ENCODE measurements at regions of chr9 and their contacts with region 1.

Region 1: DNA sequence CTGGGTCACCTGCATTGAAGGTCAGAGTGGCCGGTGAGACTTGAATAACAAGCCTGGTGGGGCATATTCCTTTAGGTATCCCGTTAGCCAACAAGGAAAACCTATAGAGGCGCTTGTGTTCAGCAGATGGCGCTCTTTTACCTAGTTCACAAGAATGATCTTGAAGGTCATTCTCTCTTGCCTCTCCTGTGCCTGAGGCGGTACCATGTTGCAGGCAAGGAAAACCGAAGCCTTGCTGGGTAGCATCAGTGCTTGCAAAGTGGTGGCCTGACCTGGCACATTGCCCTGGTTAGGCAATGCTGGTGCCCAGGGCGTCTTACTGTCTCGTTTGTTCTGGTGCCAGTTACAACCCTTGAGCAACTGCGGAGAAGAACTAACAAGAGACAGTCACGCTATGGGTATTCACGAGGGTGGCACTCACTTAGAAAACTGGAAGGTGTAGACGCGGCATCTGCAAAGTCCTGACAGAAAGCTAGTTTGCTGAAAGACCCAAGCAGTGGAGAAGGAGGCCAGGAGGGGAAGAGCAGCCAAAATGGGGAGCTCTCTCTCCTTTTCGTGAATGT is 56.7 kb downstream of the AOPEP start:
- DNase-seq: peak; percentile 75
- ATAC-seq: peak; percentile 86
- H3K4me3 ChIP-seq: no peak overlapping the region
- H3K27ac ChIP-seq: no peak overlapping the region
- H3K4me1 ChIP-seq: peaks cover 29% of the 10 kb centered on the region
- H3K27me3 ChIP-seq: no peaks in the 10 kb centered on the region
- CTCF ChIP-seq: peak; percentile 90
- EP300 ChIP-seq: no peak
- POLR2A ChIP-seq: no peak
- RAD21 ChIP-seq: peak; percentile 92

Region 2: GRCh38 chr9:94882966-94883641 is 99.9 kb after region 1 on chr9:
- CTCF ChIA-PET with region 1: no interaction called
- POLR2A ChIA-PET with region 1: no interaction called
- in situ Hi-C with region 1: no loop called
- intact Hi-C with region 1: no loop called
- DNase-seq: no peak
- ATAC-seq: no peak
- H3K4me3 ChIP-seq: no peak overlapping the region
- H3K27ac ChIP-seq: no peak overlapping the region
- H3K4me1 ChIP-seq: peaks cover 27% of the 10 kb centered on the region
- H3K27me3 ChIP-seq: no peaks in the 10 kb centered on the region
- CTCF ChIP-seq: no peak
- EP300 ChIP-seq: no peak
- POLR2A ChIP-seq: no peak
- RAD21 ChIP-seq: no peak

Region 3: GRCh38 chr9:94900222-94901018 is 117.2 kb after region 1 on chr9:
- CTCF ChIA-PET with region 1: no interaction called
- POLR2A ChIA-PET with region 1: no interaction called
- in situ Hi-C with region 1: no loop called
- intact Hi-C with region 1: loop called (anchors 10 kb)
- DNase-seq: no peak
- ATAC-seq: peak; percentile 55
- H3K4me3 ChIP-seq: peak overlapping the region; percentile 32 to 58 (median 56)
- H3K27ac ChIP-seq: peak overlapping the region; percentile 85
- H3K4me1 ChIP-seq: peaks cover 88% of the 10 kb centered on the region
- H3K27me3 ChIP-seq: no peaks in the 10 kb centered on the region
- CTCF ChIP-seq: no peak
- EP300 ChIP-seq: 0 out of 4 replicates have a peak, but pooled peaks of 1 of the 2 experiments have one; percentile 12
- POLR2A ChIP-seq: 0 out of 4 replicates have a peak, but pooled peaks of 1 of the 2 experiments have one; percentile 1
- RAD21 ChIP-seq: no peak

Region 4: DNA sequence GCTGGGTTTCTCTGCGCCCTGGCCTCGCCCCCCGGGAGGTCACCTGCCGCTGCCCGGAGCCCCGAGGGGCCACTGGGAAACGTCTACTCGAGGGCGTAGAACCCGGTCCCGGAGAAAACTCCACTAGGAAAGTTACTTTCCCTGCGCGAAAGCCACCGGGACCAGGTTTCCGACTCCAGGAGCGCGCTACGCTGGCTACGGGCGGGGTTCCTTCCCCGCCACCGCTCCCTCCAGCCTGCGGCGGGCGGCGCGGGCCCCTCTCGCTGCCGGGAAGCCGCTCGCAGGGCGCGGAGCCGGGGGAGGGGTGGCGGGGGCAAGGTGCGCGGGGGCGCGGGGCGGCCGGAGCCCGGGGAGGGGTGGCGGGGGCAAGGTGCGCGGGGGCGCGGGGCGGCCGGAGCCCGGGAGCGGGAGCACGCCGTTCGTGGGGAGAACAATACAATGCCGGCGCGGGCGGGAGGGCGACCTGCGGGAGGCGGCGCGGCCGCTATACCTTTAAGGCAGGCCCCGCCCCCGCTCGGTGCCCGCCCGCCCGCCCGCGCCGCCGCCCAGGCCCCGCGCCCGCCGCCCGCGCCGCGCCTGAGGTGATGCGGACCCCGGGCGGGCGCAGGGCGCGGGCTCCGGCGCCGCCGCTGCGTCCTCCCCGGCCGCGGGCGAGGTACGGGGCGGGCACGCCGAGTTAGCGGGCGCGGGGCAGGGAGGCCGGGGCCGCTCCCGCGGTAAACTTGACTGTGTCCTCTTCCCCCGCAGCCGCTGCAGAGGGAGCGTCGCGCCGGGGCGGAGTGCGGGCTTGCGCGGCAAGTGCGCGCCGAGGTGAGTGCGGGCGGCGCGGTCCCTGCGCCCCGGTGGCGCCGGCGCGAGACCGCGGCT is 221.5 kb after region 1 on chr9:
- CTCF ChIA-PET with region 1: no interaction called
- POLR2A ChIA-PET with region 1: interaction called, 3 read pairs
- in situ Hi-C with region 1: no loop called
- intact Hi-C with region 1: loop called (anchors 10 kb)
- DNase-seq: peak; percentile 48
- ATAC-seq: peak; percentile 79
- H3K4me3 ChIP-seq: peak overlapping the region; percentile 78 to 92 (median 86)
- H3K27ac ChIP-seq: peak overlapping the region; percentile 99
- H3K4me1 ChIP-seq: peaks cover 50% of the 10 kb centered on the region
- H3K27me3 ChIP-seq: no peaks in the 10 kb centered on the region; a peak in 1 of 5 replicates
- CTCF ChIP-seq: no peak
- EP300 ChIP-seq: peak in 1 of 2 experiments; percentile 38; a peak in 1 of 4 replicates
- POLR2A ChIP-seq: peak; percentile 56 to 63
- RAD21 ChIP-seq: peak; percentile 56

Region 5: DNA sequence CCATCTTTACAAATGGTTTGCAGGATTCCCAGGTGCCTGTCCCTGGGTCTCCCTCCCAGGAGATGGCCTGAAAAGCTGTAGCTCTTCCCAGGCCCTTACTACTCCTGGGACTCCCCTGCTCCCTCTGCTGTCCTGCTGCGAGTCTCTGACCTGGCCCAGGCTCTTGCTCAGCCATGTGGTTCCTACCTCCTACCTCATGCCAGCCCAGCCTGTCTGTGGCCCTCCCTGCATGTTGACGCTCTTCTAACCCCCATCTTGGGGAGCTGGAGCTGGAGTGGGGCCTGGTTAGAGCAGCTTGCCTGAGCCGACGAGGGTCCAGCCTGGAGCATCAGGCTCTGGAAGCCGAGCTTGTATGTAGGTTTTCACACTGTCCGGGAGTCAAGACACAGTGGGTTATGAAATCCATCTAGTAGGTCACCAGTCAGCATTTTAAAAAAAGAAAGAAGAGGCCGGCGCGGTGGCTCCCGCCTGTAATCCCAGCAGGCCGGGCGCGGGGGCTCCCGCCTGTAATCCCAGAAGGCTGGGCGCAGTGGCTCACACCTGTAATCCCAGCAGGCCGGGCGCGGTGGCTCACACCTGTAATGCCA is 289.9 kb after region 1 on chr9:
- CTCF ChIA-PET with region 1: no interaction called
- POLR2A ChIA-PET with region 1: interaction called, 4 read pairs
- in situ Hi-C with region 1: no loop called
- intact Hi-C with region 1: loop called (anchors 1 kb)
- DNase-seq: peak; percentile 25
- ATAC-seq: peak; percentile 47
- H3K4me3 ChIP-seq: no peak overlapping the region
- H3K27ac ChIP-seq: no peak overlapping the region
- H3K4me1 ChIP-seq: peaks cover 48% of the 10 kb centered on the region
- H3K27me3 ChIP-seq: no peaks in the 10 kb centered on the region
- CTCF ChIP-seq: peak; percentile 58
- EP300 ChIP-seq: no peak
- POLR2A ChIP-seq: no peak
- RAD21 ChIP-seq: peak; percentile 65